ENCODE measurements at regions of chr19 and their contacts with region 1.

Region 1: GRCh38 chr19:46766569-46767317 is 20.5 kb upstream of the STRN4 start:
- DNase-seq: peak; percentile 73
- H3K4me3 Mint-ChIP-seq: no peak overlapping the region
- H3K27ac Mint-ChIP-seq: no peak overlapping the region
- H3K4me1 Mint-ChIP-seq: peaks cover 4% of the 10 kb centered on the region
- H3K27me3 Mint-ChIP-seq: no peaks in the 10 kb centered on the region

Region 2: GRCh38 chr19:46639358-46640182 is 127.2 kb before region 1 on chr19:
- CTCF ChIA-PET with region 1: no interaction called
- POLR2A ChIA-PET with region 1: no interaction called
- DNase-seq: peak; percentile 44
- H3K4me3 Mint-ChIP-seq: peak overlapping the region; percentile 48
- H3K27ac Mint-ChIP-seq: no peak overlapping the region
- H3K4me1 Mint-ChIP-seq: peaks cover 13% of the 10 kb centered on the region
- H3K27me3 Mint-ChIP-seq: peaks cover 26% of the 10 kb centered on the region

Region 3: DNA sequence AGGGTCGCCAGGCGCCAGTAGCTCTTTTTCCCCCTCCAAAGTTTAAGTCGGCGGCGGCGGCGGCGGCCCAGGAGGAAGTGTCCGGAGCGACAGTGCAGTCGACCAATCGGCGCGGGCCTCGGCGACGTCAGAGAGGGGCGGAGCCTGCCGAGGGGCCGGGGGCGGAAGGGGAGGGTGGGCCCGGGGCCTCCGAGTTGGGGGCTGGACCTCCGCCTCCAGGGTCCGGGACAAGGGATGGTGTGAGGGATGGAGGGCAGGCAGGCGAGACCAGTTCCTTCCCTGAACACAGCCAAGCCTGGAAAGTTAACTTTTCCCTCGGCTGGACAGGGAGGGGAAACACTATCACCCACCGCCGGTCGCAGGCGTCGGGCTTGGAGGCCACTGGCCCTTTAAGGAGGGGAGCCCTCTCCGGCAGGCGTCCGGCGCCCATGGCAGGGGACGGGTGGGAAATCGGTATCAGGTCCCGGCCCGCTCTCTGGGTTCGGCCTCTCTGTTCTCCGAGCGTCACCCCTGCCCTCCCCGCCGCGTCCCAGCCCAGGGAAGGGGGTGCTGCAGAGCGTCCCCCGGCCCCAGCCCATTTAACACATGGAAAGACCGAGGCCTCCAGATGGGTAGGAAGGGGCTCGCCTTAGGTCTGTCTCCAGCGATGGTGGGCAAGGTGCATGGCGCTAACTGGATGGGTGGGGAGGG is 49.6 kb before region 1 on chr19 and contains the start of gene PRKD2:
- CTCF ChIA-PET with region 1: no interaction called
- POLR2A ChIA-PET with region 1: no interaction called
- DNase-seq: peak; percentile 92
- H3K4me3 Mint-ChIP-seq: peak within 1 kb of the TSS; percentile 97
- H3K27ac Mint-ChIP-seq: peak within 1 kb of the TSS; percentile 95
- H3K4me1 Mint-ChIP-seq: peaks cover 45% of the 10 kb centered on the region
- H3K27me3 Mint-ChIP-seq: no peaks in the 10 kb centered on the region
- total RNA-seq, gene PRKD2: 167 to 177 TPM

Region 4: GRCh38 chr19:46733693-46734292 is 33.0 kb before region 1 on chr19:
- CTCF ChIA-PET with region 1: no interaction called
- POLR2A ChIA-PET with region 1: no interaction called
- DNase-seq: no peak
- H3K4me3 Mint-ChIP-seq: no peak overlapping the region
- H3K27ac Mint-ChIP-seq: no peak overlapping the region
- H3K4me1 Mint-ChIP-seq: peaks cover 28% of the 10 kb centered on the region
- H3K27me3 Mint-ChIP-seq: no peaks in the 10 kb centered on the region

Region 5: GRCh38 chr19:46746281-46747013 is 20.3 kb before region 1 on chr19 and contains the start of gene STRN4:
- CTCF ChIA-PET with region 1: interaction called, 22 read pairs
- POLR2A ChIA-PET with region 1: interaction called, 4 read pairs
- DNase-seq: peak; percentile 65
- H3K4me3 Mint-ChIP-seq: peak within 1 kb of the TSS; percentile 93
- H3K27ac Mint-ChIP-seq: peak within 1 kb of the TSS; percentile 80
- H3K4me1 Mint-ChIP-seq: peaks cover 53% of the 10 kb centered on the region
- H3K27me3 Mint-ChIP-seq: no peaks in the 10 kb centered on the region
- total RNA-seq, gene STRN4: 75.1 to 78.5 TPM

Region 6: GRCh38 chr19:46776927-46777911 is 10.5 kb after region 1 on chr19:
- CTCF ChIA-PET with region 1: interaction called, 29 read pairs
- POLR2A ChIA-PET with region 1: interaction called, 3 read pairs
- DNase-seq: no peak
- H3K4me3 Mint-ChIP-seq: no peak overlapping the region
- H3K27ac Mint-ChIP-seq: no peak overlapping the region
- H3K4me1 Mint-ChIP-seq: peaks cover 48% of the 10 kb centered on the region
- H3K27me3 Mint-ChIP-seq: no peaks in the 10 kb centered on the region

Region 7: GRCh38 chr19:46821498-46822409 is 55.0 kb after region 1 on chr19:
- CTCF ChIA-PET with region 1: interaction called, 16 read pairs
- POLR2A ChIA-PET with region 1: no interaction called
- DNase-seq: peak; percentile 78
- H3K4me3 Mint-ChIP-seq: no peak overlapping the region
- H3K27ac Mint-ChIP-seq: peak overlapping the region; percentile 85
- H3K4me1 Mint-ChIP-seq: peaks cover 50% of the 10 kb centered on the region
- H3K27me3 Mint-ChIP-seq: no peaks in the 10 kb centered on the region

Measured in activated CD4-positive, alpha-beta memory T cell treated with anti-CD3 and anti-CD28 coated beads, Interleukin-2, amount 10 ng/mL, durations not matched to agents 7 days and 5 days (primary cell).